Activated CD8-positive, alpha-beta T cell treated with anti-CD3 and anti-CD28 coated beads for 36 hours (primary cell): ENCODE measurements at regions of chr14 and their contacts with region 1.

Region 1: GRCh38 chr14:49940808-49941421 is 48.0 kb downstream of the ARF6 start:
- DNase-seq: no peak
- ATAC-seq: no peak
- H3K4me3 Mint-ChIP-seq: no peak overlapping the region
- H3K27ac Mint-ChIP-seq: peak overlapping the region; percentile 78
- H3K4me1 Mint-ChIP-seq: peaks cover 52% of the 10 kb centered on the region
- H3K27me3 Mint-ChIP-seq: no peaks in the 10 kb centered on the region
- CTCF ChIP-seq: no peak

Region 2: DNA sequence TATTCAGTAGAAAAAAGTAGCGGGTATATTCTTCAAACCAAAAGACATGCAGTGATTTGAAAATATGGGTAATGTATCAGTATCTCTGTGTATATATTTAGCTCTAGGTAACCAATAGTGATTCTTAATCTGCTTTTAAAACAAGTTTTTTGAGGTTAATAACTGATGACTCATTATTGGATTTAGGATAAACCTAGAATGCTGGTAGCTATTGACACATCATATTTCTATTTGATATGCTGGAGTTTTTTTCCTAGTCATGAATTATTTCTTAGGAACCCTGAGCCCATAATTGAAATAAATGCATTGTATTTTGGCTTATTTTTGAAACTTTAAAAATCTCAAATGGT is 32.5 kb before region 1 on chr14:
- CTCF ChIA-PET with region 1: interaction called, 4 read pairs
- POLR2A ChIA-PET with region 1: no interaction called
- intact Hi-C with region 1: loop called (anchors 5 kb)
- DNase-seq: no peak
- ATAC-seq: no peak
- H3K4me3 Mint-ChIP-seq: no peak overlapping the region
- H3K27ac Mint-ChIP-seq: peak overlapping the region; percentile 88
- H3K4me1 Mint-ChIP-seq: peaks cover 43% of the 10 kb centered on the region
- H3K27me3 Mint-ChIP-seq: no peaks in the 10 kb centered on the region
- CTCF ChIP-seq: no peak